ENCODE measurements at regions of chr5 and their contacts with region 1.

Region 1: DNA sequence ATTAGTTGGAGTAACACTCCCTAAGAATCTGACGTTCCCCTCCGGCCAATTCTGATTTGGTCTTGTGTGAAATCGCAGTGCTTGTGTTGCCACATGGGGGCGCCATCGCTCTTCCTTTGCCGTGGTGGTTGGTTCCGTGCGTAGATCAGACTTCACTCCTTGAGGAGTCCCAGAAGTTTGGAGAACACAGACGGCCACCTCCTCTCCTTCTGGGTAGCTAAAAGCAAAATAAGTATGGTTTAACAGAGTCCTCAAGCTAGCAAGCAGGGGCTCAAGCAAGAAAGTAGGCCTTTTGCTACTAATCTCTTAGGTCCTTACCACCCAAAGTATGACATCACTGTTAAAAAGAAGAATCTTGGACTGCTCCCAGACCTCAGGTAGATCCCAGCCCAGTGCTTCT is 59.5 kb downstream of the HSPA4 start:
- DNase-seq: peak; percentile 92

Region 2: GRCh38 chr5:133247881-133248624 is 136.8 kb after region 1 on chr5:
- intact Hi-C with region 1: loop called (anchors 2 kb)
- DNase-seq: peak; percentile 82

Region 3: GRCh38 chr5:133287500-133287899 is 176.2 kb after region 1 on chr5:
- intact Hi-C with region 1: loop called (anchors 2 kb)
- DNase-seq: no peak

Region 4: DNA sequence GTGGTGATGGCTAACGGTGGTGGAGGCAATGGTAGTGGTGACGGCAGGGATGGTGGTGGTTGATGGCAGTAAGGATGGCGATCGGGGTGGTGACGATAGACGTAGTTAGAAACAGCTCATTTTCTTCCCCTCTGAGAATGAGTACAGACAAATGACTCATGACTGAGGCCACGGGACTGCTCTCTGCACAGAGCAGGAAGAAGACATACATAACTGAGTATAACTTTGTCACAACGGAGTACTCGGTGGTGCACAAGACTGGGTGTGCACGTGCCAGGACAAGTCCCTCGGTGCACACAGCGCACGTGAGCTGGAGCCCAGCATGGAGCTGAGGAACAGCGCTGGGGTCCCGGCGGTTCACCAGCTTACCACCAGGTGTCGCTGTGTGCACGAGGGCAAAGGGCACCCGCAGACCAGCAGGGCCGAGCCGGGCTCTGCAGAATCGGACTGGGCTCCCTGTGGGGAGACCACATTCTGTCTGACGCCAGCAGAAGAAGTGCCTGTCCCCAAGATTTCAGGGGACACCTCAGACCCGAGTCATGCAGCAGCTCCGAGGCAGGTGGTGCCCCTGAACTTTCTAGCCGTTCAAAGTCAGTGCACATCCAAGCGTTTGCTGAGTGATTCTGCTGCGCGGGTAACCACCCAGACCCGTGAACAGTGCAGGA is 312.5 kb after region 1 on chr5:
- intact Hi-C with region 1: loop called (anchors 10 kb)
- DNase-seq: peak; percentile 87

Region 5: GRCh38 chr5:133868946-133869518 is 757.7 kb after region 1 on chr5:
- intact Hi-C with region 1: loop called (anchors 10 kb)
- DNase-seq: no peak

Region 6: DNA sequence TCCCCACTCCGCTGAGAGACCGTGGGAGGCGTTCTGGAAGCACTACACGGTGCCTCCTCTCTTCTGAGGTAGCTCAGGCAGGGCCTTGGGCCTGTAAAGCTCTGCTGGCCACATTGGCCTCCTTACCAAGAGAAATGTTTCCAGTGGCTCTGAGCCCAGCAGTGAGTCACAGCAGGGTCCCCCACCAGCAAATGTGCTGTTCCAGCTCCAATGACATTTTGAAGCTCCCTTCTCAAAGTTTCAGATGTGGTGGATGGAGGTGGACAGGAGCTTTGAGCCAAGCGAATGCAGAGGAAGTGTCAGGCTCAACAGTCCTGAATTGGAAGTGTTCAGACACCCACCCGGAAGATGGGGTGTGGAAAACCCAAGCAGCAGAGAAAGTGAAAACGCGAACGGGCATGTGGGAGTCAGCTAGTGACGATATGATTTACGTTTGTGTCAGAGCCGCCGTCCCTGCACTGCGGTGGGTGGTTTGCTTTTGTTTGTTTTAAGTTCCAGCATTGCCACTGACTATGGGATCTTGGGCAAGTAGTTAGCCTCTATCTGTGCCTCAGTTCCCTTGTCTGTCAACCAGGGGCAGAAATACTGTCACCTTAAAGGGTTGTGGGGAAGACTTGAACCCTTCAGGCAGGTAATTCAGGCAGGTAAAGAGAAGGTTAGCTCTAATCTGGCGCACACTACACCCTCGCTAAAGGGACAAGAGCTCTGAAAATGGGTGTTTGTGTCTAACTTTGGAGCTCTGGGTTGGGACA is 818.9 kb after region 1 on chr5:
- intact Hi-C with region 1: loop called (anchors 10 kb)
- DNase-seq: no peak